ENCODE measurements at regions of chr20 and their contacts with region 1.

Region 1: DNA sequence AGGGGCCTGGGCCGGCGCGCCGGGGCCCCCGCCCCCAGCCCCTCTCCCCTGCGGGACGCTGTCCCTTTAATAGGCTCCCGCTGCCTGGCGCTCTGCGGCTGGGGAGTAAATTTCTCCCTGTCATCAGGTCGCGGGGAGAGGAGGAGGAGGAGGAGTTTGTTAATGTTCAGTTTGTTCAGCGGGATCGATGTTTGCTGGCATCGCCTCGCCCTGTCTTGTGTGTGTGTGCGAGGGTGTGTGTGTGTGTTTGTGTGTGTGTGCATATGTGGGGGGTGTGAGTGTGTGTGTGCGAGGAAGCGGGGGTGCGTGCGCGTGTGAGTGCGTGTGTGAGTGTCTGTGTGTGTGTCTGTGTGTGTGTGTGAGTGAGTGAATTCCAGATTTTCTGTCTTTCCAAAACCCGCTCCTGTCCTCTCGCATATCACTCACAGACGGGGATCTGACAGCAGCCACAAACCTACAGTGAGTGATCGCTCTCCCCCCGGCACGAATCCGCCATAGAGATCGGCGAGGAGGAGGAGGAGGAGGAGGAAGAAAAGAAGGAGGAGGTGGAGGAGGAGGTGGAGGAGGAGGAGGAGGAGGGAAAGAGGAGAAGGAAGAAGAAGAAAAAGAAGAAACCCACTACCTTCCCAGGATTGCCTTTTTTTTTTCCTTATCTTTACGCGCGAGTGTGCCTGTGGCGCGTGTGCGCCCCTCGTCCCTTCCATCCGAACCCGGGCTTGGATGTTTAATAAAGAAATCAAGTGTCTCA is at the start of gene TSHZ2:
- DNase-seq: peak; percentile 41
- H3K4me3 Mint-ChIP-seq: peak within 1 kb of the TSS; percentile 99
- H3K27ac Mint-ChIP-seq: peak within 1 kb of the TSS; percentile 99
- H3K4me1 Mint-ChIP-seq: peaks cover 48% of the 10 kb centered on the region
- H3K27me3 Mint-ChIP-seq: peaks cover 6% of the 10 kb centered on the region
- total RNA-seq, gene TSHZ2: 26.0 and 27.5 TPM in 2 replicates

Region 2: DNA sequence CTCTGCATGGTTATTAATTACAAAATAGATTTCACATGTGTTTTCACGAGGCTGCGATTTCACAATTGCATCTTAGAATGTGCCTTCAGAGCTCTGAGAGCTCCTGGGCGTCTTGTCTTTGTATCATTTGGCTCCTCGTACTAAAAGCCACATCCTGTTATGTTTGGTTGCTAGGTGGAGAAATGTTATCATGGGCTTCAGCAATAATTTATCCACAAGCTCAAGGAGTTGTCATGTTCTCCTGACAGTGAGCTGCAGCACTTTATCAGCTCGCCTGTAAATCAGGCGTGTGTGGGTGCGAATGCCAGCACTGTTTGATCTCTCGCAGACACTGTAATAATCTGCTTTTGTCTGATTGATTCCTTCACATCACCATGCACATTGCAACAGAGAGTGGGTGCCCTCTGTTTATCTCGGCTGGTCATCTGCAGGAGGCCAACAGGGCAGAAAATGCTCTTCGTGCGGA is 562.1 kb before region 1 on chr20:
- intact Hi-C with region 1: loop called (anchors 1 kb)
- DNase-seq: peak; percentile 38
- H3K4me3 Mint-ChIP-seq: peak overlapping the region; percentile 53
- H3K27ac Mint-ChIP-seq: peak overlapping the region; percentile 66
- H3K4me1 Mint-ChIP-seq: peaks cover 43% of the 10 kb centered on the region
- H3K27me3 Mint-ChIP-seq: no peaks in the 10 kb centered on the region

Region 3: DNA sequence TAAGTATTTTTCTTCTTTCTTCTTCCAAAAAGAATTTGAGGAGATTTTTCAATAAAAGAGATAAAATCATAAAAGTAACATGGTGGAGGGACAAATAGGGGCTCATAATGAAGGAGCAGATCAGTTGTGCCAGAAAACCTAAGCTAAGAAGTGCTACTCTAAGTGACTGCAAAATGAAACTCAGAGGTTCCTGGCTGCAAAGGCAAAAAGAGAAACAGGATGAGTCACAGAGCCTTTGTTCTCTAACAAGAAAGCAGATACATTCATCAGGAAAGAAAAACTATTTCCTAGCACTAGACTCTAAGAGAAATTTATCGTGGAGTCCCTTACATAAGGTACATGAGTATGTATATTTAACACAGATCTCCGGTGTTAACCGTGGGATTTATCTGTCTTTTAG is 49.6 kb after region 1 on chr20:
- intact Hi-C with region 1: loop called (anchors 1 kb)
- DNase-seq: peak; percentile 33
- H3K4me3 Mint-ChIP-seq: peak overlapping the region; percentile 24
- H3K27ac Mint-ChIP-seq: peak overlapping the region; percentile 90
- H3K4me1 Mint-ChIP-seq: peaks cover 87% of the 10 kb centered on the region
- H3K27me3 Mint-ChIP-seq: no peaks in the 10 kb centered on the region

Region 4: GRCh38 chr20:53070706-53071392 is 98.5 kb after region 1 on chr20:
- intact Hi-C with region 1: loop called (anchors 1 kb)
- DNase-seq: peak; percentile 19
- H3K4me3 Mint-ChIP-seq: peak overlapping the region; percentile 10
- H3K27ac Mint-ChIP-seq: peak overlapping the region; percentile 74
- H3K4me1 Mint-ChIP-seq: peaks cover 53% of the 10 kb centered on the region
- H3K27me3 Mint-ChIP-seq: peaks cover 2% of the 10 kb centered on the region

Region 5: DNA sequence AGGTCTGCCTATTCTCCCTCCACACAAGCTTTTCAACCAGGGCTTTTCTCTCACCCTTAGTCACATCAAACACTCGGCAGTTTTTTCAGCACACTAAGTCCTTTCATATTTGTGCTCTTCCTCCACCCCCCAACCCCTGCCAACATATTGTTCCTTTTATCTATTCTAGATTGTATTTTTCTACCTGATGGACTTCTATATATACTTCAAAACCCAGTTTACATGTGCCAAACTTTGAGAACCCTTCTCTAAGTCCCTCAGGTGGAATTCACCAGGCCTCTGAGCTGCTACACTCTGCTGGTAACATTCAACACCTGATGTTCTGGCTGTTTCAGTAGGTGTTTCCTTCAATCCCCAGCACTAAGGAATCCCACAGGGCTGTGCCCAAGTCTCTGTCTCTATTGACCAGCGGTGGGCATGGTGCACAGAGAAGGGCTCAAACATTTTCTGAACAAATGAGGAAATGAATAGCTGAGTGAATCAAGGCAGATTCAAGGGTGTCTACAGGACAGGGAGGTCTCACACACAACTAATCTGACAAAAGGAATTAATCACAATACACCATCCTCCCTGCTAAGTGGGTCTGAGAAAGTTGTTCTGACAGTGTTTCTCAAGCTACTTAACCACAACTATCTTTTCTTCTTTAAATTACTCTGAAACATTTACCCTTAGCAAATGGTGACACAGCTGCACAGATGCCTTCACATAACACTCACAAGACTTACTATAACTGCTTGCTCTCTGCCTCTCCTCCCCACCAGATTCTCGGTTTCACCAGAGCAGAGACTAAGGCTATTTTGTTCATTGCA is 166.3 kb after region 1 on chr20:
- intact Hi-C with region 1: loop called (anchors 2 kb)
- DNase-seq: no peak
- H3K4me3 Mint-ChIP-seq: no peak overlapping the region
- H3K27ac Mint-ChIP-seq: peak overlapping the region; percentile 76
- H3K4me1 Mint-ChIP-seq: peaks cover 31% of the 10 kb centered on the region
- H3K27me3 Mint-ChIP-seq: peaks cover 2% of the 10 kb centered on the region

Region 6: DNA sequence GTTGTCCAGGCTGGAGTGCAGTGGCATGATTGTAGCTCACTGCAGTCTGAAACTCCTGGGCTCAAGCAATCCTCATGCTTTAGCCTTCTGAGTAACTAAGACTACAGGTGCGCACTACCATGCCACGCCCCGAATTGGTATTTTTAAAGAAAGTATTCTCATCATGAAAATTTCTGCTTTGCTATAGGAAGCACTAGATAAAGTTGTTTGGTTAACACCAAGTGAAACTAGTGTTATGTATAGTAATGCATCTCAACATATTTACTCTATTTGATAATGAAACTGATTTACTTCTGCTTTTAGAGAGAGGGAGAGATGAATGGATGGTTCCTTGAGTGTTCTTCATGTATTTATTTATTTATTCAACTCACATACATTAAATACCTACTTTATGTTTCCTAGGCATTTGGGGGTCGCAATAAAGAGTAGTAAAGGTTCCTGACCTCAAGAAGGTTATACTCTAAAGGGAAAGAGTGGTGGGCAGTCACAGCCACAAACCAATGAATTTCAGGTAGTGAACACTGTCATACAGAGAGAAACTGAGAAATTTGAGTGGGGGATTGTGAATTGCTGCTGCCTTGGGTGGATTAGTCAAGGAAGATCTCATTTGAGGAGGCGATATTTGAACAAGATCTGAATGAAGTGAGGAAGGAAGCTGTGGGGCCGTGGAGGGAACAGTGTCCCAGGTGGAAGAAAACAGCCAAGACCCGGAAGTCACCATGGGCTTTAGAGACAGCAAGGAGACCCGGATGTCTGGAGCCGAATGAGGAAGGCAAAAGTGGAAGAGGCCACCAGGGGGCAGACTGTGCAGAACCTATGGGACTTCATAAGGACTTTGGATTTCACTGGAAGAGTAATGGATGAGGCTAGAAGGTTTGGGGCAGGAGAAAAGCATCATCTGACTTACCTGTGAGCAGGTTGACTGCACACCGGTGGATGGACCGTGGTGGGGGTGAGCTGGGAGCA is 185.4 kb after region 1 on chr20:
- intact Hi-C with region 1: loop called (anchors 2 kb)
- DNase-seq: no peak
- H3K4me3 Mint-ChIP-seq: peak overlapping the region; percentile 12
- H3K27ac Mint-ChIP-seq: peak overlapping the region; percentile 50
- H3K4me1 Mint-ChIP-seq: peaks cover 65% of the 10 kb centered on the region
- H3K27me3 Mint-ChIP-seq: no peaks in the 10 kb centered on the region

Region 7: DNA sequence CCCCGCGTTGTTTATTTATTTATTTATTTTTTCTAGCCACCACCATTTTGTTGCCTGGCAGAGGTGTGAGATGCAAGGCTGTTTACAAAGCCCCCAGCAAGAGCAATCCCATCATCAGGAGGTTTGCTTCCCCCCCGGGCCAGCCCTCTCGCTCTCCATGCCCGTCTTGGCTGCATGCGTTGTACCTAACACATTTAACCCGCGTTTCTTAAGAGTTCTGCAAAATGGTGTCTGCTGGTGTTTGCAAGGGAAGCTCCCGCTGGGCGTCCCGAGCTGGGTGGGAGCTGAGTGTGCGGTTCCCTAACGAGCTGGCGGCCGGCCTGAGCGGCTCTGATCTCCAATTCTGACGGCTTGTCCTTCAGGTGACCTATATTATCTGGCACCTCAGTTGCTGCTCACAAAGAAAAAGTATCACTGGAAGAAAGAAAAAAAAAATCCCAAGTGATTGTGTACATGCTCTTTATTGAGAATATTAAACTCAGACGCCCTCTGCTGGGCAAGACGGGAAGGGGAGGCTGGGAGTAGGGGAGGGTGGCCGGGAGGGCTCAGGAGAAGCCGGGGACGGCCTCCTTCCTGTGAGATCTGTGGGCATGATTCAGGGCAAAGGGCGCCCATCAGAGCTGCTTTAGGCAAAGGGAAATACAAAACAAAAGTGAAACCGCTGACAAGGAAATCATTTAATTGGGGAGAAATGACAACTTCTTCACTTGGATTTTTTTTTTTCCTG is 943.2 kb after region 1 on chr20:
- intact Hi-C with region 1: loop called (anchors 10 kb)
- DNase-seq: peak; percentile 84
- H3K4me3 Mint-ChIP-seq: peak overlapping the region; percentile 89
- H3K27ac Mint-ChIP-seq: peak overlapping the region; percentile 93
- H3K4me1 Mint-ChIP-seq: peaks cover 42% of the 10 kb centered on the region
- H3K27me3 Mint-ChIP-seq: no peaks in the 10 kb centered on the region